Activated naive CD4-positive, alpha-beta T cell treated with anti-CD3 and anti-CD28 coated beads for 36 hours (primary cell): ENCODE measurements at regions of chr7 and their contacts with region 1.

Region 1: GRCh38 chr7:106285051-106285854 is 470 bp upstream of the NAMPT start:
- DNase-seq: peak; percentile 100
- H3K4me3 Mint-ChIP-seq: peak overlapping the region; percentile 92
- H3K27ac Mint-ChIP-seq: peak overlapping the region; percentile 99
- H3K4me1 Mint-ChIP-seq: peaks cover 45% of the 10 kb centered on the region
- H3K27me3 Mint-ChIP-seq: peaks cover under 1% of the 10 kb centered on the region

Region 2: DNA sequence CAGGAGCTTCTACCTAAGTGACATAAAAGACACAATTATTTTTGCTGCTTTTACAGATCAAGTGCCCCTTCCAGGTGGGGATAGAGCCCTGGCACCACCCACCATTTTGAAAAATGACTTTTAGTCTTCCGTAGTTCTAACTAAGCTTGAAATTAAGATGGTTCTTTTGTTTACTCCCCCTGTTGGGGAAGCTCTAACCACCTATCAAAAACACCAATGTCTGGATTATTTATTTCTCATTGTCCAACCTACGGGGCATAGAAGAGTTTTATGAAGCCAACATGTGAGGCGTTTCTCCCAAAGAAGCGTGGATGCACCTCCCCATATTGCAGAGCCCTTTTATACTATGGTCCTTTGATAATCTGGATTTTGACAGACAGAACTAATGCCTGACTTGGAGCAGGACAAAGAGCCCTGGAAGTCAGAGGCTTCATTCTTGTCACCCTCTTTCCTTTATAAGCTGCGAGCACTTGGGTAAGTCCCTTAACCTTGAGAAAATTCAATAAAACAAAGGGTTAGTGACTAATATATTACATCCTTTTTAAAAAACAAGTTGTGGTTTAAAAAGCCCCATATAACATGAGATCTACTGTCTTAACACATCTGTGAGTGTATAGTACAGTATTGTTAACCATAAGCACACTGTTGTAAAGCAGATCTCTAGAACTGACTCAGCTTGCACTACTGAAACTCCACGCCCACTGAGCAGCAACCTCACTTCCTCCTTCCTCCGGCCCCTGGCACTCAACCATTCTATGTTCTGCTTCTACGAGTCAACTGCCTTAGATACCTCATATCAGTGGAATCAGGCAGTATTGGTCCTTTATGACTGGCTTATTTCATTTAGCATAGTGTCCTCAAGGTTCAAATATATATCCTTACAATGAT is 476.3 kb before region 1 on chr7:
- CTCF ChIA-PET with region 1: no interaction called
- intact Hi-C with region 1: loop called (anchors 1 kb)
- DNase-seq: peak; percentile 96
- H3K4me3 Mint-ChIP-seq: no peak overlapping the region
- H3K27ac Mint-ChIP-seq: peak overlapping the region; percentile 38
- H3K4me1 Mint-ChIP-seq: peaks cover 58% of the 10 kb centered on the region
- H3K27me3 Mint-ChIP-seq: peaks cover 3% of the 10 kb centered on the region

Region 3: GRCh38 chr7:106329971-106330733 is 44.9 kb after region 1 on chr7:
- CTCF ChIA-PET with region 1: no interaction called
- intact Hi-C with region 1: loop called (anchors 1 kb)
- DNase-seq: peak; percentile 46
- H3K4me3 Mint-ChIP-seq: no peak overlapping the region
- H3K27ac Mint-ChIP-seq: peak overlapping the region; percentile 73
- H3K4me1 Mint-ChIP-seq: peaks cover 17% of the 10 kb centered on the region
- H3K27me3 Mint-ChIP-seq: peaks cover 22% of the 10 kb centered on the region

Region 4: GRCh38 chr7:106425017-106425719 is 139.9 kb after region 1 on chr7:
- CTCF ChIA-PET with region 1: interaction called, 4 read pairs
- intact Hi-C with region 1: loop called (anchors 1 kb)
- DNase-seq: peak; percentile 96
- H3K4me3 Mint-ChIP-seq: peak overlapping the region; percentile 80
- H3K27ac Mint-ChIP-seq: peak overlapping the region; percentile 99
- H3K4me1 Mint-ChIP-seq: peaks cover 86% of the 10 kb centered on the region
- H3K27me3 Mint-ChIP-seq: peaks cover 3% of the 10 kb centered on the region

Region 5: DNA sequence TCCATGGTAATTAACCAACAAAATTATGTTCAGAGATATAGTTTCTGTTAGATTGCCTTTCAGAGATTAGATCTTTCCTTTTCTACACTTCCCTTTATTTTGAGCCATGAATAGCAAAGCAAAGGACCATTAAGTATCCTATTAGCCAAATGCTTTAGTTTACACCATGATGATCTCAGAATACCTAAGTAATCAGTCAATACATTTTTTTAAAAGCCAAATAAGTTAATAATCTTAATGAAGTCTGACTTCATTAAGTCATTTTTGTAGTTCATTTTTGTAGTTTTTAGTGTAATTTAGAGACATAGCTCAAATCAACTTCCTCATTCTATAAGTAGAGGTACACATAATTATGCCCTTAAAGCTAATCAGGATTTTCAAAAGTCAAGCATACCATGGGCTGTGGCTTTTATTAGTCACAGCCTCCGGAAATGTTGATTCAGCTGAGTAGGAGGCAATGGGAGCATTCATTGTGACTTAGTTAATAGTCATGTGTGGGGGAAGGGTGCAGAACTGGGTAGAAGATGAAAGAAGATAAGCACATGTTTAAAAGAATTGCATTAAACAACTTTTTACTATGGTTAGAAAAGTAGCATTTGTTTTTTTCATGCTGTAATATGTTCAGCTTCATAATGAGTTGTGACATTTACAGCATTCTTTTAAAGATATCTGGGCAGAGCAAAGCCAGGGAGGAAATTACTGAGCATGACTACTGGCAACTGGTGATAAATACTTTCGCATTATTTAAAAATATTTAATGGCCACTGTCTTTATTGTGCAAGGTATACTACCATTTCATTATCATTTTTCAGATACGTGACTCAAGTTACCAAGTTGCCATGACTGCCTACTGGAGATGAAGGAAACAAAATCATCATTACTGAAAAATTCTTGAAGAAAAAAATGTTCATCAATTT is 433.0 kb after region 1 on chr7:
- CTCF ChIA-PET with region 1: no interaction called
- intact Hi-C with region 1: loop called (anchors 1 kb)
- DNase-seq: peak; percentile 92
- H3K4me3 Mint-ChIP-seq: no peak overlapping the region
- H3K27ac Mint-ChIP-seq: no peak overlapping the region
- H3K4me1 Mint-ChIP-seq: peaks cover 10% of the 10 kb centered on the region
- H3K27me3 Mint-ChIP-seq: no peaks in the 10 kb centered on the region

Region 6: GRCh38 chr7:107743567-107744344 is 1458.5 kb after region 1 on chr7 and contains the start of gene CBLL1:
- CTCF ChIA-PET with region 1: no interaction called
- intact Hi-C with region 1: loop called (anchors 10 kb)
- DNase-seq: peak; percentile 98
- H3K4me3 Mint-ChIP-seq: peak within 1 kb of the TSS; percentile 96
- H3K27ac Mint-ChIP-seq: peak within 1 kb of the TSS; percentile 100
- H3K4me1 Mint-ChIP-seq: peaks cover 42% of the 10 kb centered on the region
- H3K27me3 Mint-ChIP-seq: no peaks in the 10 kb centered on the region
- total RNA-seq, gene CBLL1: 31.6 to 32.1 TPM